ENCODE measurements at regions of chr17 and their contacts with region 1.

Region 1: DNA sequence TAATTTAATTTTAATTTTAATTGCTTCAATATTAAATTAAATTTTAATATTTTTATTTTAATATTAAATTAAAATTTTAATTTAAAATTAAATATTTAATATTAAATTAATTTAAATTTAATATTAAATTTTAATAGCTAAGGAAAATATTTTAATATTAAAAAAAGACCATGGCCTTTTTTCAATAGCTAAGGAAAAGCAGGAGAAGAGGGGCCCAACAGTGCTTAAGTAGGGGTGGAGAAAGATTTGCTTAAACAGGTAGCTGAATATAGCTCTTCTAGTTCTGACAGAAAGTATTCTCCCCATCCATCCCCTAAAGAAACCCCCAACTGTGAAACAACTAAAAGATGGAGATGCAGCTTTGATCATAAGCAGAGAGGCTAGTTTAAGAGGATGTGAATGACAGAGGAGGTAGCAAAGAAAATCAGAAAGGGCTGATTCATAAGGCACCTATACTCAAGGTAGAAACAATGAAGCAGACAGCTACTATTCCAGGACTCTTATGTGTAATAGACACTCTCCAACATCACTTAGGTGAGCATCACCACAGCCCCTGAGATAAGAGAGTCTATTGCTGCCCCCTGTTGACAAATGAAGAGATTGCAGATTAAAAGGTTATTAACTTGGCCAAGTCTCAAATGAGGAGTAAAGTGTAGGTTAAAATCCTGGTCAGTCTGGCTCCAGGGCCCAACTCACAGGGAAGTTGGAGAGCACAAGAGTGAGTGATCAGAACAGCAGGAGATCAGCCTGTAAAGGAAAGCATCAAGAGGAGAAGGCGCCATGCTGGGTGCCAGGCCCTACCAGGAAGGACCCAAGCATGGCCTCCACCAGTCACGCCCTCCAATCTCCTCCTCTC is 7.8 kb upstream of the RNASEK start:
- DNase-seq: no peak
- ATAC-seq: peak; percentile 67 to 75

Region 2: GRCh38 chr17:6666077-6666521 is 338.5 kb before region 1 on chr17:
- intact Hi-C with region 1: no loop called
- DNase-seq: peak; percentile 67
- ATAC-seq: peak; percentile 88 to 94

Region 3: DNA sequence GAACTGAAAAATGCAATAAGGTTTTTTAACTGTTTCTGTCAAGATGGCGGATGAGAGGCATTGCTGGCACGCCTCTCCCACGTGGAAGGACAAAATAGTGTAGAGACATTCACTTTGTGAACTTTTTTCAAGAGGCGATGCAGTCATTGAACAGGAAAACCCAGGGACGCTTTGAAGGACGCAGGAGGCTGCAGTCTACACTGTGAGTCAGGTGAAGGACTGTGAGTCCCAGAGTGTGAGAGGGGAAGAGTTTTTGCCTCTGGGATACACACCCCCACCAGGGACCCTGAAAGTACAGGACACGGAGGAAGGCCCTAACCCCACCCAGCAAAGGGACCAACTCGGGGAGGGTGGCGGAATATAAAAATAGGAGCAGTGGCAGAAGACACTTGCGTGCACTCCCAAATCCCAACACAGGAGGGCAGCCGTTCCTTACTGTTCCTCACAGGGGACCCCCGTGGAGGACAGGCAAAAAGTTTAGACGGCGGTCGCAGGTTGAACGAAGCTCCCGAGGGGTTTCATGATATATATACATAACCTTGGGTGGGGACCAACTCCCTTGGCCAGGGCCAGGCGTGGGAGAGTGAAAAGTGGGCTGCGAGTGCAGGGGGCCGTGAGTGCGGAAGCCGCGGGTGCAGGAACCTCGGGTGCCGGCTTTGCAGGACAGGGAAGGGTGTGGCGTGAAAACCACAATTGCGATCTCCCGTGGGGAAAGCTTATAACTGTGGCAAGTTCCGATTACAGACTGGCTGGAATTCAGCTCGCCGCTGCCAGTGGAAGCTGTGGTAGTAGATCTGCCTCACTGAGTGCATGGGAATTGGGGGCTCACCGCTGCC is 90.8 kb before region 1 on chr17:
- intact Hi-C with region 1: loop called (anchors 2 to 5 kb)
- DNase-seq: peak; percentile 78
- ATAC-seq: peak; percentile 81

Region 4: GRCh38 chr17:6948562-6948961 is 56.1 kb before region 1 on chr17:
- intact Hi-C with region 1: no loop called
- DNase-seq: no peak
- ATAC-seq: peak in 1 of 2 donors; percentile 67

Region 5: GRCh38 chr17:7156342-7156940 is 151.8 kb after region 1 on chr17:
- intact Hi-C with region 1: no loop called
- DNase-seq: no peak
- ATAC-seq: no peak